Activated CD4-positive, alpha-beta memory T cell treated with anti-CD3 and anti-CD28 coated beads for 36 hours (primary cell): ENCODE measurements at regions of chr1 and their contacts with region 1.

Region 1: GRCh38 chr1:24642481-24643361 is at the start of gene SRRM1:
- DNase-seq: peak; percentile 100
- H3K4me3 Mint-ChIP-seq: peak within 1 kb of the TSS; percentile 96
- H3K27ac Mint-ChIP-seq: peak within 1 kb of the TSS; percentile 98
- H3K4me1 Mint-ChIP-seq: peaks cover 53% of the 10 kb centered on the region
- H3K27me3 Mint-ChIP-seq: no peaks in the 10 kb centered on the region
- total RNA-seq, gene SRRM1: 225 to 227 TPM

Region 2: DNA sequence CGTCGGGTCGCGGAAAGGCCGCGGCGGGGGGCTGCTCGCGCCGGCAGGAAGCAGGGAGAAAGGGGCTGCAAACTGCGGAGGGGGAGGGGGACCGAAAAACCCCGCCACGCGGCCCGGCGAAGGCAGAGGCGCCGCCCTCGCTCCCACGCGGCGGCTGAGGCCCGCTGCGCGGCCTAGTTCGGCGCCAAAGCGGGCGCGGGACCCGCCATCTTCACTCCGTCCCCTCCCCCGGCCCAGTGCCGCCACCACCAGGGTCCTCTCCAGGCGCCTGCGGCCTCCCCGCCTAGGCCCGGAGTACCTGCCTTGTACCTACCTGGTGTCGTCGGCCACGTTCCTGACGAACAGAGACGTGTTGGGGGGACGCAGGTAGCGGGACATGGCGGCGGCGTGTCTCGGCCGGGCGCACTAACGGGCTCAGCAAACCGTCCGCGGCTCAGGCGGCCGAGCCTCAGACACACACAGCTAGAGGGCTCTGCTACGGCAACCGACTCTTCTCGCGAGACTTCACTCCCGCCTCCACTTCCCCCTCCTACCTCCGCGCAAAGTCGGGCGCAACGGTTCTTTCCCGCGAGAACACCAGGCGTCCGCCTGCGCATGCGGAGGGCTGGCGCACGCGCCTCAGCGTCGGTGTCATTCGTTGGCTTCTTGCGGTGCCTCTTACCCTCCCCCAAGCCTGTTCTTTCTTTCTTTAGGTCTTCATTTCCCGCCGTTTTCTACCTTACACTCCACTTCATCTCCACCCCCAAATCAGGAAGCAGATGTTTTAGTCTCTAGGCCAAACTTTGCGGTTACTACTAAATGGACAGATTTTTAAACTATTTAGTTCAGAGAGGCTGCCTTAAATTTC is 662.6 kb before region 1 on chr1 and contains the start of gene SRSF10:
- CTCF ChIA-PET with region 1: no interaction called
- POLR2A ChIA-PET with region 1: no interaction called
- intact Hi-C with region 1: loop called (anchors 5 kb)
- DNase-seq: peak; percentile 99
- H3K4me3 Mint-ChIP-seq: peak within 1 kb of the TSS; percentile 92
- H3K27ac Mint-ChIP-seq: peak within 1 kb of the TSS; percentile 100
- H3K4me1 Mint-ChIP-seq: peaks cover 40% of the 10 kb centered on the region
- H3K27me3 Mint-ChIP-seq: no peaks in the 10 kb centered on the region
- total RNA-seq, gene SRSF10: 175 to 184 TPM

Region 3: DNA sequence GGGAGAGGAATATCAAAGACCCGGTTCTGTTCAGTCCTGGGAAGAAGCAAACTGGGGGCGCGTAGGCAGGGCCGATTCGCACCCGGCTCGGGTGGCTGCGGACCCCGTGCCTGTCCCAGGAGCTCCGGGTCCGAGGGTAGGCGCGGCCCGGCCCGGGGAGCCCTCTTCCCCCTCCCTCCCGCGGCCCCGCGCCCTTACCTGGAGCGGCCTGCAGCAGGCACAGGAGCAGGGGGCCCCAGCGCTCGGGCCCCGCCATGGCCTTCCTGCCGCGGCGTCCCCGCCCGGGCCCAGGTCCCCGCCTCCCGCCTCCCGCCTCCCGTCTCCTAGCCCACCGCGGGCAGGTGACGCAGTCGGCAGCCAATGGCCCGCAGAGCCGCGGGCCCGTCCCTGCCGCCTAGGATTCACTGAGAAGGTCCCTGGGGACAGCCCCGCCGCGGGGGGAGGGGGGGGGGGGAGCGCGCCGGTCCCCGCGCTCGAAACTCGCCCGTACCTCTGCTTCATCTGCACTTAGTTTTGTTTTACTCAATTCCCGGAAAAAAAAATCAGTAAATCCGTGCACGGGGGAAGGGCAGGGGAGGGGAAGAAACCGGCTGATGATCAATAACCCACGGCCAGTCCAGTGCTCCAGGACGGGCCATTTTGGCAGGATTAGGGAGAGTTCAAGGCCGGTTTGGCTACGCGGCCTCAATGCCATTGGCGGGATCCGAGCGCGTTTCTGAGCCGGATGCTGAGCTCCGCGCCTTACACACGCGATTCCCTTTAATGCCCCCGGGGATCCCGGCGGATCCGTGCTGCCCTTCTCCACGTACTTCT is 455.5 kb before region 1 on chr1 and contains the start of gene IFNLR1:
- CTCF ChIA-PET with region 1: no interaction called
- POLR2A ChIA-PET with region 1: no interaction called
- intact Hi-C with region 1: loop called (anchors 5 kb)
- DNase-seq: peak; percentile 91
- H3K4me3 Mint-ChIP-seq: peak within 1 kb of the TSS; percentile 80
- H3K27ac Mint-ChIP-seq: peak within 1 kb of the TSS; percentile 54
- H3K4me1 Mint-ChIP-seq: peaks cover 48% of the 10 kb centered on the region
- H3K27me3 Mint-ChIP-seq: peaks cover 2% of the 10 kb centered on the region
- total RNA-seq, gene IFNLR1: 6.2 to 10.0 TPM

Region 4: GRCh38 chr1:24341260-24341659 is 301.5 kb before region 1 on chr1:
- CTCF ChIA-PET with region 1: no interaction called
- POLR2A ChIA-PET with region 1: no interaction called
- intact Hi-C with region 1: no loop called
- DNase-seq: no peak
- H3K4me3 Mint-ChIP-seq: no peak overlapping the region
- H3K27ac Mint-ChIP-seq: no peak overlapping the region
- H3K4me1 Mint-ChIP-seq: no peaks in the 10 kb centered on the region
- H3K27me3 Mint-ChIP-seq: no peaks in the 10 kb centered on the region

Region 5: DNA sequence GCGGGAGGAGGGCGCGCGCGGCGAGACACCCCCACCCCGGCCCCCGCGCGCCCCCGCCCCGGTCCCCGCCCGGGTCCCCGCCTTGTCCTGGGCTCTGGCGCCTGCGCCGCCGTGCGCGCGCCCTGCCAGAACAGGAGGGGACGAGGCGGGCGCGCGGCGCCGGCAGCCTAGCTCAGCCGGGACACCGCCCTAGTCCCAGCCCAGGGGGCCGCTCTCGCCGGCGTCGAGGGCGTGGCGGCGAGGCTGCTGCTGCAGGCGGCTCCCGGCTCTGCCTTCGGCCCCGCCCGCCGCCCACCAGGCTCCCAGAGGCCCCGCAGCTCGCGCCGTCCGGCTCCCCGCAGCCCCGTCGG is 140.0 kb before region 1 on chr1 and contains the start of gene RCAN3:
- CTCF ChIA-PET with region 1: interaction called, 5 read pairs
- POLR2A ChIA-PET with region 1: no interaction called
- intact Hi-C with region 1: loop called (anchors 2 kb)
- DNase-seq: peak; percentile 92
- H3K4me3 Mint-ChIP-seq: peak within 1 kb of the TSS; percentile 98
- H3K27ac Mint-ChIP-seq: peak within 1 kb of the TSS; percentile 99
- H3K4me1 Mint-ChIP-seq: peaks cover 61% of the 10 kb centered on the region
- H3K27me3 Mint-ChIP-seq: no peaks in the 10 kb centered on the region
- total RNA-seq, gene RCAN3: 71.3 to 78.8 TPM

Region 6: GRCh38 chr1:24575915-24576587 is 66.7 kb before region 1 on chr1:
- CTCF ChIA-PET with region 1: no interaction called
- POLR2A ChIA-PET with region 1: no interaction called
- intact Hi-C with region 1: no loop called
- DNase-seq: no peak
- H3K4me3 Mint-ChIP-seq: no peak overlapping the region
- H3K27ac Mint-ChIP-seq: peak overlapping the region; percentile 11
- H3K4me1 Mint-ChIP-seq: no peaks in the 10 kb centered on the region
- H3K27me3 Mint-ChIP-seq: no peaks in the 10 kb centered on the region

Region 7: DNA sequence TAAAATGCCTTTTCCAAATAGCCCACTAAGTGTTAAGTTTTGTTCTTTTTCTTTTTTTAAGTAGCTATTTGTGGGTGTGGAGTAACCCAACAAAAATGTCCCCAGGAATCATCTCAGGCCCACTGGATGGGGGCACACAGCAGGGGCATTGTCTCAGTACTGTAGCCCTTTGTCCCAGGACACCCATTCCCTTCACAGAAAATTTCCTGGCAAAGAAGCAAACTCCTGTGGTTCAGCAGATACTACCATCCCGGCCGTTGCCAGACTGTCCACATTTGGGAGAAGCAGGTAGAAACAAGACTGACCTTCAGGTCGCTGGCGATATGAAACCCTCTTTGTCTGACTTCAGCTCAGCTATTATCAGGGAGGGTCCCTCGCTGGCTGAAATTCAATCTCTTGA is 23.3 kb before region 1 on chr1:
- CTCF ChIA-PET with region 1: no interaction called
- POLR2A ChIA-PET with region 1: no interaction called
- intact Hi-C with region 1: no loop called
- DNase-seq: no peak
- H3K4me3 Mint-ChIP-seq: no peak overlapping the region
- H3K27ac Mint-ChIP-seq: no peak overlapping the region
- H3K4me1 Mint-ChIP-seq: no peaks in the 10 kb centered on the region
- H3K27me3 Mint-ChIP-seq: no peaks in the 10 kb centered on the region

Region 8: GRCh38 chr1:24744911-24745710 is 102.4 kb after region 1 on chr1 and contains the start of gene CLIC4:
- CTCF ChIA-PET with region 1: no interaction called
- POLR2A ChIA-PET with region 1: no interaction called
- intact Hi-C with region 1: loop called (anchors 2 kb)
- DNase-seq: peak; percentile 100
- H3K4me3 Mint-ChIP-seq: peak within 1 kb of the TSS; percentile 76
- H3K27ac Mint-ChIP-seq: peak within 1 kb of the TSS; percentile 58
- H3K4me1 Mint-ChIP-seq: peaks cover 34% of the 10 kb centered on the region
- H3K27me3 Mint-ChIP-seq: no peaks in the 10 kb centered on the region
- total RNA-seq, gene CLIC4: 25.5 to 26.3 TPM